Activated CD8-positive, alpha-beta T cell treated with anti-CD3 and anti-CD28 coated beads, Interleukin-2, amount 10 ng/mL, durations not matched to agents 7 days and 5 days (primary cell): ENCODE measurements at regions of chr14 and their contacts with region 1.

Region 1: GRCh38 chr14:24665440-24665991 is 31.5 kb upstream of the GZMB start:
- DNase-seq: peak; percentile 84
- ATAC-seq: peak; percentile 84
- H3K4me3 Mint-ChIP-seq: peak overlapping the region; percentile 54
- H3K27ac Mint-ChIP-seq: peak overlapping the region; percentile 94
- H3K4me1 Mint-ChIP-seq: peaks cover 94% of the 10 kb centered on the region
- H3K27me3 Mint-ChIP-seq: no peaks in the 10 kb centered on the region

Region 2: DNA sequence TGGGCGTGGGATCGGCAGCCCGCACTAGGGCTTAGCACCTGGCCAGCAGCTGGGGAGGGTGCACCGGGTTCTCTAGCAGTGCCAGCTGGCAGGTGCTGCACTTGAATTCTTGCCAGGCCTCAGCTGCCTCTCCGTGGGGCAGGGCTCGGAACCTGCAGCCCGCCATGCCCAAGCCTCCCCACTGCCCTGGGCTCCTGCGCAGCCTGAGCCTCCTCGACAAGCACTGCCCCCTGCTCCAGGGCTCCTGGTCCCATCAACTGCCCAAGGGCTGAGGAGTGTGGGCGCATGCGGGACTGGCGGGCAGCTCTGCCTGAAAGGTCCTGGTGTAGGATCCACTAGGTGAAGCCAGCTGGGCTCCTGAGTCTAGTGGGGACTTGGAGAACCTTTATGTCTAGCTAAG is 192.3 kb before region 1 on chr14:
- CTCF ChIA-PET with region 1: no interaction called
- POLR2A ChIA-PET with region 1: no interaction called
- DNase-seq: no peak
- ATAC-seq: no peak
- H3K4me3 Mint-ChIP-seq: no peak overlapping the region
- H3K27ac Mint-ChIP-seq: no peak overlapping the region
- H3K4me1 Mint-ChIP-seq: peaks cover 12% of the 10 kb centered on the region
- H3K27me3 Mint-ChIP-seq: peaks cover 14% of the 10 kb centered on the region

Region 3: DNA sequence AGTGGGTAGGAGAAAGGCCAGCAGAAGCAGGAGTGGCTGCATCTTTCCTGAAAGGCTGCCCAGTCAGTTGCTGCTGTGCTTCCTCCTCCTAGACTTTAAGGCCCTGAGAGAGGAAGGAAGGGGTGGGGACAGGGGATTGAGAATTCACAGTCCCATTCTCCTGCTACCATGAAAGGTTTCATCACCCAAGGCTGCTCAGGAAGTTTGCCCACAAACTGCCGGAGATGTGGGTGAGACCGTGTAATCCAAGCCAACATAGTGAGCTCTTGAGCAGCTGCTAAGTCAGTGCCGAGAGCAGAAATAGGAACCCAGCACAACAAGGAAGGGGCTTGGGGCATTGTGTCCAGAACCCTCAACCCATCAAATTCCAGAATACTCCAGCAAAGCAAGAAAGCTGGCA is 89.3 kb before region 1 on chr14 and contains the start of gene CTSG:
- CTCF ChIA-PET with region 1: no interaction called
- POLR2A ChIA-PET with region 1: no interaction called
- DNase-seq: no peak
- ATAC-seq: no peak
- H3K4me3 Mint-ChIP-seq: no peak within 1 kb of the TSS
- H3K27ac Mint-ChIP-seq: peak within 1 kb of the TSS; percentile 16
- H3K4me1 Mint-ChIP-seq: peaks cover 11% of the 10 kb centered on the region
- H3K27me3 Mint-ChIP-seq: peaks cover 20% of the 10 kb centered on the region
- total RNA-seq, gene CTSG: 0.32 to 0.47 TPM

Region 4: GRCh38 chr14:24612196-24612595 is 53.3 kb before region 1 on chr14:
- CTCF ChIA-PET with region 1: interaction called, 12 read pairs
- POLR2A ChIA-PET with region 1: no interaction called
- DNase-seq: no peak
- ATAC-seq: no peak
- H3K4me3 Mint-ChIP-seq: no peak overlapping the region
- H3K27ac Mint-ChIP-seq: no peak overlapping the region
- H3K4me1 Mint-ChIP-seq: peaks cover 62% of the 10 kb centered on the region
- H3K27me3 Mint-ChIP-seq: no peaks in the 10 kb centered on the region

Region 5: GRCh38 chr14:24630872-24631477 is 34.5 kb before region 1 on chr14:
- CTCF ChIA-PET with region 1: interaction called, 20 read pairs
- POLR2A ChIA-PET with region 1: interaction called, 7 read pairs
- DNase-seq: no peak
- ATAC-seq: no peak
- H3K4me3 Mint-ChIP-seq: peak overlapping the region; percentile 93
- H3K27ac Mint-ChIP-seq: peak overlapping the region; percentile 98
- H3K4me1 Mint-ChIP-seq: peaks cover 74% of the 10 kb centered on the region
- H3K27me3 Mint-ChIP-seq: no peaks in the 10 kb centered on the region

Region 6: DNA sequence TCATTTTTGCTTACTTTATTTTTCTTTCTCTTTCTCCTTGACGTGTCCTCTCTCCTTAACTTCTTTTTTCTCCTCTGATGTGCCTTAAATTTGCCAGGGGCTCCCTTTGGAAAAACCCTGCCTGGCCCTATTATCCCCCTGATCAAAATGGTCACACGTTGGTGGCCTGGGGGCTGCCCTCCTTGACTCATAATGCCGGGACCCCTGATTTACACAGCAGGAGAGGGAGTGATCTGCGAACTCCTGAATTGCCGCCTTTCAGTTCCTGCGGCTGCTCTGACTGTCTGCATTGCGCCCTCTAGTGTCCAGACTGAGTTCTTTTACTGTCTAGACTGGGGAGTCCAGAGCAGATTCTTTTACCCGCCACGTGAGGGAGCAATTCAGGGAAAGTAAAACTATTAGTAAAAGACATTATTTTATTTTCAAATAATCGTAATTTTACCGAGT is 13.3 kb after region 1 on chr14:
- CTCF ChIA-PET with region 1: interaction called, 54 read pairs
- POLR2A ChIA-PET with region 1: interaction called, 26 read pairs
- DNase-seq: peak; percentile 92
- ATAC-seq: peak; percentile 73
- H3K4me3 Mint-ChIP-seq: peak overlapping the region; percentile 77
- H3K27ac Mint-ChIP-seq: peak overlapping the region; percentile 93
- H3K4me1 Mint-ChIP-seq: peaks cover 71% of the 10 kb centered on the region
- H3K27me3 Mint-ChIP-seq: no peaks in the 10 kb centered on the region

Region 7: GRCh38 chr14:24690492-24690891 is 25.0 kb after region 1 on chr14:
- CTCF ChIA-PET with region 1: interaction called, 12 read pairs
- POLR2A ChIA-PET with region 1: interaction called, 8 read pairs
- DNase-seq: peak; percentile 59
- ATAC-seq: no peak
- H3K4me3 Mint-ChIP-seq: no peak overlapping the region
- H3K27ac Mint-ChIP-seq: peak overlapping the region; percentile 54
- H3K4me1 Mint-ChIP-seq: peaks cover 46% of the 10 kb centered on the region
- H3K27me3 Mint-ChIP-seq: no peaks in the 10 kb centered on the region

Region 8: GRCh38 chr14:24761141-24761540 is 95.6 kb after region 1 on chr14:
- CTCF ChIA-PET with region 1: no interaction called
- POLR2A ChIA-PET with region 1: no interaction called
- DNase-seq: no peak
- ATAC-seq: no peak
- H3K4me3 Mint-ChIP-seq: no peak overlapping the region
- H3K27ac Mint-ChIP-seq: no peak overlapping the region
- H3K4me1 Mint-ChIP-seq: no peaks in the 10 kb centered on the region
- H3K27me3 Mint-ChIP-seq: peaks cover 11% of the 10 kb centered on the region